Activated B cell treated with CpG ODN at 0.5 μM for 24 hours (primary cell): ENCODE measurements at regions of chr14 and their contacts with region 1.

Region 1: DNA sequence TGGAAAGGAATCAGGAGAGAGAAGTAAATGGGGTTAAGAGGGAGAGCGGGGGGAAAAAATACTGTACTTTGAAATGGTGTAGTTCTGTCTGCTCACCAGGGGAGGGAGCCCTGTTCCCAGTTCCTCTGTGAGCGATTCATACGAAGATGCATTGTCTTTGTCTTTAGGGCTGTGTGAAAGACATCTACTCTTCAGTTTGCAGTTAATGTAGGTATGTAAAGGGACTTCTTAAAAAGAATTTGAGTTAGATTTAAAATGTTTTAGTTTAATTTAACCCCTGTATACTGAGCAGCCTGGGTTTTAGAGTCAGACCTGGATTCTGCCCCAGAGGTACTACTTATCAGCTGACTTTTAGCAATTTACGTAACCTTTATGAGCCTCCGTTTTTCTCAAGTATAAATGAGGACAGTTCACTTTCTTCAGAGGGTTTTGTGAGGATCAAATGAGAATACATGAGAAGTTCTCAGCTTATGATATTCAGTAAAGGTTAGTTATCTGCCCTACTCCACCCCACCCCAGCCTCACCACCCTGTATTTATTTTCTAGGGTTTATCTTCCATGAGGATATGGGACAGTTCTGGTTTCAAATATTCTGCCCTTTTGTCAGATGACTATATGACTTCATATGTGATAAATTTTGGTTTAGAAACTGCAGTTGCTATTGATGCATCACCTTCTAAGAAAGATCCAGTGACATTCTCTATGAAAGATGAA is 82.5 kb upstream of the EVL start:
- DNase-seq: no peak
- ATAC-seq: peak; percentile 98
- H3K4me3 Mint-ChIP-seq: no peak overlapping the region
- H3K27ac Mint-ChIP-seq: no peak overlapping the region
- H3K4me1 Mint-ChIP-seq: no peaks in the 10 kb centered on the region
- H3K27me3 Mint-ChIP-seq: no peaks in the 10 kb centered on the region
- CTCF ChIP-seq: peak; percentile 88

Region 2: GRCh38 chr14:99971087-99971940 is 11.4 kb before region 1 on chr14:
- CTCF ChIA-PET with region 1: interaction called, 4 read pairs
- POLR2A ChIA-PET with region 1: no interaction called
- intact Hi-C with region 1: loop called (anchors 1 kb)
- DNase-seq: peak; percentile 68
- ATAC-seq: peak; percentile 90
- H3K4me3 Mint-ChIP-seq: peak overlapping the region; percentile 76
- H3K27ac Mint-ChIP-seq: no peak overlapping the region
- H3K4me1 Mint-ChIP-seq: peaks cover 12% of the 10 kb centered on the region
- H3K27me3 Mint-ChIP-seq: peaks cover 46% of the 10 kb centered on the region
- CTCF ChIP-seq: no peak

Region 3: GRCh38 chr14:99995700-99996356 is 13.1 kb after region 1 on chr14:
- CTCF ChIA-PET with region 1: interaction called, 7 read pairs
- POLR2A ChIA-PET with region 1: no interaction called
- intact Hi-C with region 1: loop called (anchors 1 kb)
- DNase-seq: peak; percentile 39
- ATAC-seq: peak; percentile 100
- H3K4me3 Mint-ChIP-seq: no peak overlapping the region
- H3K27ac Mint-ChIP-seq: no peak overlapping the region
- H3K4me1 Mint-ChIP-seq: peaks cover 12% of the 10 kb centered on the region
- H3K27me3 Mint-ChIP-seq: peaks cover 20% of the 10 kb centered on the region
- CTCF ChIP-seq: peak; percentile 86

Region 4: DNA sequence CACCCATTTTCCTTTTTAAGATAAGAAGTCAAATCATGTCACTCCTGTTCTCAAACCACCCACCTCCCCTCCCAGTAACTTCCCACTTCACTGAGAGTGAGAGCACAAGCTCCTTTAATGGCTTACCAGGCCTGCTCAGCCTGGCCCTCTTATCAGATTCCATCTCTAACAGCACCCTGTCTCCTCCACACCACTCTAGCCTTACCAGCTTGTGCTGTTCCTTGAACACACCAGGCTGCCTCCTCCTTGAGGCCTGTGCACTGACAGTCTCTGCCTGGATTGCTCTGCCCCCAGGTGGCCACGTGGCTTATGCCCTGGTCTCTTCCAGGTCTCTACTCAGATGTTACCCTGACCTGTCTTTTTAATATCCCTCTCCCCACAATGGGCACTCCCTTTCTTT is 42.4 kb after region 1 on chr14:
- CTCF ChIA-PET with region 1: interaction called, 4 read pairs
- POLR2A ChIA-PET with region 1: no interaction called
- intact Hi-C with region 1: loop called (anchors 1 kb)
- DNase-seq: no peak
- ATAC-seq: no peak
- H3K4me3 Mint-ChIP-seq: no peak overlapping the region
- H3K27ac Mint-ChIP-seq: no peak overlapping the region
- H3K4me1 Mint-ChIP-seq: no peaks in the 10 kb centered on the region
- H3K27me3 Mint-ChIP-seq: peaks cover 6% of the 10 kb centered on the region
- CTCF ChIP-seq: no peak

Region 5: GRCh38 chr14:101665515-101666078 is 1682.9 kb after region 1 on chr14:
- CTCF ChIA-PET with region 1: no interaction called
- POLR2A ChIA-PET with region 1: no interaction called
- intact Hi-C with region 1: loop called (anchors 10 kb)
- DNase-seq: no peak
- ATAC-seq: peak; percentile 31
- H3K4me3 Mint-ChIP-seq: no peak overlapping the region
- H3K27ac Mint-ChIP-seq: no peak overlapping the region
- H3K4me1 Mint-ChIP-seq: no peaks in the 10 kb centered on the region
- H3K27me3 Mint-ChIP-seq: peaks cover 28% of the 10 kb centered on the region
- CTCF ChIP-seq: no peak